ENCODE measurements at regions of chr17 and their contacts with region 1.

Region 1: DNA sequence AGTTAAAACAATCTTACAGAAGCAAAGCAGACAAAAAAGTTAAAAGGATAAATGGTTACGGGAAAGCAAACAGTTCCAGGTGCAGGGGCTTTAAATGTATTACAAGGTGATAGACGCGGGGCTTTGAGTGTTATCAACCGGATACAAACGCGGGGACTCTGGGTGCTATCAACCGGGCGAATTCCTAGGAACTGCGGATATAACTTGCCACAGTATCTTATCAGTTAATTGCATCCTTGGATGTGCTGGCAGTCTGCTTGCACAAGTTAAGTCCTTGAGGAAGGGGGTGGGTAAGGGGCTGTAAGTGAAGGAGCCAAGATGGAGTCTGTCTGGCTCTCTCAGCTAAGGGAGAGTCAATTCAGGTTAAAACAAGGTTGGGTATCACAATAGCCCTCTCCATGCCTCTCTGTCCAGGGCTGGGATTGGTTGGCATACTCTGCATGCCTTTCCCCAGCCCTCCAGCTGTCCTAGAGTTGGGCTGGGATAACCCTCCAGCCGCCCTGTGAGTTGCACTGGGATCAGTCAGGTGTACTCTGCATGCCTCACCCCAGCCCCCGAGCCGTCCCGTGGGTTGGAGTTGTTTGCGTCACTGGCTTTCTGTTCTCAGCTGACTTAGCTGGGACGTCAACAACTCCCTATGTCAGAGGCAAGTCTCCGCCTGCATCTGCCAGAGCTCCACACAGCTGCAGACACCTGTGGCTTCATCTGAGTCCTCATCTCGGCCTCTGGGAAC is 40.9 kb downstream of the TMEM235 start:
- DNase-seq: peak; percentile 15
- H3K4me3 ChIP-seq: no peak overlapping the region
- H3K27ac ChIP-seq: no peak overlapping the region; a peak in 1 of 4 replicates
- H3K4me1 ChIP-seq: peaks cover 0 to 54% of the 10 kb centered on the region in 2 experiments; a peak in 2 of 4 replicates
- H3K27me3 ChIP-seq: peaks cover 16% of the 10 kb centered on the region
- CTCF ChIP-seq: no peak
- EP300 ChIP-seq: no peak
- RAD21 ChIP-seq: no peak

Region 2: DNA sequence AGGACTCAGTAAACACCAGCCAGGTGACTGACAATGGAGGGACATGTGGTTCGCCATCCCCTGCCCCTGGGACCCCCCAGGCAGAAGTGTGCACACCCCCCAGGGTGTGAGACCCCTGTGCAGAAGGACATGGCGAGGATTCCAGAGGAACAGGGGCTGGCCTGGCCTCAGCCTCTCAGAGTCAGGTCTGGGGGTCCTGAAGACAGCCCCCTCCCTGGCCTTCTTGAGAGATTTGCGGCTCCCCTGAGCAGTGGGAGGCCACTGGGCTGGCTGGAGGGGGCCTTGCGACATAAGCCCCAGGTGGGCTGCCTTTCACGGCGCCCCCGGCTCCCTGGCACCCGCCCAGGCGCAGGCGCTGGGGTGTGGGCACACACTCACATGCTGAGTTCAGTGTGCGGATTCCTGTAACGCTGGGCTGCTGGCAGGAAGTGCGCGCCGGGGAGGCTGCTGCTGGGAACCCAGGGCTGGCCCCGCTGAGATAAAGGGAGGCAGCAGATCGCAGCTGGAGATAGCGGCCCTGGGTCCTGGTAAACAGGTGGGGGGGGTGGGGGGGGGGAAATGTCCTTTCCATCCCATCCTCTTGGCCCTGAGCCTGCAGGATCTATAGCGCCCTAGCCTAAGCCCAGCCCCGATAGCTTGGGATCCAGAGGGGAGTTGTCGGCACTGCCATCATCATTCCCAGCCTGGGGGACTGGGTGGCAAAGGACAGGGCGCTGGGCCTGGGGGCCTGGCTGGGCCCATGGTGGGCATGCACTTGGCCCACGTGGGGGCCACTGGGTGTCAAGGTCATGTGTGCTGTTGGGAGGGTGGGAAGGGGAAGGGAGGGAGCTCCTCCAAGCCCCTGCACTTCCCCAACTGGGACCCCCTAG is 13.8 kb before region 1 on chr17:
- CTCF ChIA-PET with region 1: interaction called, 60 read pairs
- POLR2A ChIA-PET with region 1: interaction called, 13 read pairs
- DNase-seq: peak; percentile 96
- H3K4me3 ChIP-seq: no peak overlapping the region; a peak in 1 of 4 replicates
- H3K27ac ChIP-seq: peak overlapping the region in 1 of 2 experiments; percentile 99; a peak in 3 of 4 replicates
- H3K4me1 ChIP-seq: peaks cover 5 to 68% of the 10 kb centered on the region in 2 experiments; a peak in 2 of 4 replicates
- H3K27me3 ChIP-seq: no peaks in the 10 kb centered on the region
- CTCF ChIP-seq: no peak
- EP300 ChIP-seq: peak in 1 of 2 experiments; percentile 95; a peak in 2 of 4 replicates
- RAD21 ChIP-seq: no peak

Measured in SK-N-SH (cell line).